Posterior vena cava (tissue), 2 donors: ENCODE measurements at regions of chr2 and their contacts with region 1.

Region 1: GRCh38 chr2:159118115-159118858 is 149.8 kb downstream of the TANC1 start:
- DNase-seq: peak; percentile 94

Region 2: DNA sequence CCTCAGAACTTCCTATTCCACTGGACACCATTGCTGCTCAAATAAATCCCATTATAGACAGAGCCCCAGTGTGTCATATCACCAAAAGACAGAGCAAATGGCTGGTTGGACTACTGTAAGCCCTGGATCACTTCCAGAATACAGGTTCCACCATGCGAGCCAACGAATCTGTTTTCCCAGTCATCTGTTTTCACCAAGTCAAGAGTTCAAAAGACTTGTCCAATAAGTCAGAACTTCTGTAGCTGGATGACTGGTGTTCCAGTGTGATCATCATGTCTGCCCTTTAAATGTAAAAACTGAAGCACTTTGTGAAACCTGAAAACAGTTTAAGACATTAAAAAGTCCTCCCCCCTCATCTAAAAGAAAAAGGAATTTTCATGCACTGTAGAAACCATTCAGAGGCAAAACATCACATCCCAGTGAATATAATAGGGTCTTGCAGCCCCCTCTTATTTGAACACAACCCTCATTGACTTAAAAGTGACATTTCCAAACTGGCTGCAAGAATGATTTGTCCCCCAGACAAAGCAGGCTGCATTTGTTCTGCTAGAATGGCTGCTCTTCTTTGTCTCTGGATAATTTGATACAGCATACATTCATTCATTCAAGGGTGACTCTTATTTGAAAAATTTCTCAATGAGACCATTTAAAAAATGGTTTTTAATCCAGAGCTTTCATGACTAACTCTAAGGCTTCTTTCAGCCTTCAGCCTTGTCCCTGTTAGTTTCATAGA is 214.4 kb before region 1 on chr2:
- intact Hi-C with region 1: loop called (anchors 5 to 10 kb)
- DNase-seq: no peak

Region 3: GRCh38 chr2:159053161-159054031 is 64.9 kb before region 1 on chr2:
- intact Hi-C with region 1: loop called in 1 of 2 experiments (anchors 10 kb)
- DNase-seq: no peak

Region 4: GRCh38 chr2:159484532-159484931 is 366.2 kb after region 1 on chr2:
- intact Hi-C with region 1: no loop called
- DNase-seq: no peak